Vagina (tissue), 2 donors: ENCODE measurements at regions of chr1 and their contacts with region 1.

Region 1: GRCh38 chr1:179002552-179003345 is 22.9 kb upstream of the FAM20B start:
- DNase-seq: no peak
- H3K4me3 ChIP-seq: peak overlapping the region in 1 of 2 donors; percentile 11
- H3K27ac ChIP-seq: no peak overlapping the region
- H3K4me1 ChIP-seq: no peaks in the 10 kb centered on the region
- H3K27me3 ChIP-seq: no peaks in the 10 kb centered on the region
- CTCF ChIP-seq: peak; percentile 92 to 96 (median 94)
- POLR2A ChIP-seq: no peak

Region 2: GRCh38 chr1:178774263-178774662 is 228.5 kb before region 1 on chr1:
- intact Hi-C with region 1: loop called (anchors 10 kb)
- DNase-seq: no peak
- H3K4me3 ChIP-seq: no peak overlapping the region
- H3K27ac ChIP-seq: no peak overlapping the region
- H3K4me1 ChIP-seq: no peaks in the 10 kb centered on the region
- H3K27me3 ChIP-seq: no peaks in the 10 kb centered on the region
- CTCF ChIP-seq: peak; percentile 3 to 38 (median 24)
- POLR2A ChIP-seq: no peak

Region 3: DNA sequence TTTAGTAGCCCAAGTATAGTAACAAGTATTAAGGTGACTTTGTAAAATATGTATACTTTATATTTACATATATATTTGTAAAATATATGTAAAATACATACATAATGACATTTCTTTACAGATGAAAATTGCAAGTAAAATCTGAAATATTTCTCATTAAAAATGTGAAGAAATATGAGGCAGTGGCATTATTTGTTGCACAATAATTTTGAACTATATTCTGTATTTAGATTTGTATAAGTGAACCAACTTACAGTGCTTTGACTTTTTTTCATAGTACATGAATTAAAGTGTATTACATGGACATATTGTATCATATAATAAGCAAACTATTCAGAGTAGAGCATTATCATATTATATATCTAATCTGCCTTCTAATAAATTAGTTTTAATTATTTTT is 192.2 kb before region 1 on chr1:
- intact Hi-C with region 1: loop called (anchors 5 kb)
- DNase-seq: no peak
- H3K4me3 ChIP-seq: no peak overlapping the region
- H3K27ac ChIP-seq: no peak overlapping the region
- H3K4me1 ChIP-seq: no peaks in the 10 kb centered on the region
- H3K27me3 ChIP-seq: no peaks in the 10 kb centered on the region
- CTCF ChIP-seq: no peak
- POLR2A ChIP-seq: no peak